Activated T-helper 1 cell treated with anti-CD3 and anti-CD28 coated beads, Interleukin-12 subunit alpha, Interleukin-12 subunit beta, Interleukin-2, Interleukin-4 antibody, amounts not matched to agents 30 ng/mL and 10 ng/mL and 1 ng/mL, durations not matched to agents 14 hours and 24 hours and 36 hours (primary cell): ENCODE measurements at regions of chr6 and their contacts with region 1.

Region 1: DNA sequence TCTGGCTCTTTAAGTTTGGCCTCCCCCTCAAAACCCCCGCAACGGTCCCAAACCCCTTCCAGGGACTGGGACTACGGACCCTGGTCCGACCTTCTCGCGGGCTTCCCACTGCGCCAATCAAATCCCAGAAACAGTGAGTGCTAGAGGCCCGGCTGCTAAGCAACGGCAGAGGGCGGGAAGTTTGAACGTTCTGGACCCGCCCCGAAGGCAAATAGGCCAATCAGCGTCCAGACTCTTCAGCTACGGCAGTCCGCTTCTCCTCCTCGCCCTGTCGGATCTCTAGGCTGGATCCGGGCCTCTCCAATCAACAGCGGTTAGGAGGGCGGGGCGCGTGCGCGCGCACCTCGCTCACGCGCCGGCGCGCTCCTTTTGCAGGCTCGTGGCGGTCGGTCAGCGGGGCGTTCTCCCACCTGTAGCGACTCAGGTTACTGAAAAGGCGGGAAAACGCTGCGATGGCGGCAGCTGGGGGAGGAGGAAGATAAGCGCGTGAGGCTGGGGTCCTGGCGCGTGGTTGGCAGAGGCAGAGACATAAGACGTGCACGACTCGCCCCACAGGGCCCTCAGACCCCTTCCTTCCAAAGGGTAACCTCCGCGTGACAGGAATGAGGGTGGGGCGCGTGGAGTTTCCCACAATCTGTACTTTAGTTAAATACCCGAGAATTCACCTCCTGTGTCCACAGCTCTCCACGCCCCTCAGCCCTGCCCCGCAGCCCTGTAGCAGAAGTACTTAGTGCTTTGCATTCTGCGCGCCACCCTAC is at the start of gene MSH5:
- DNase-seq: peak; percentile 97
- H3K4me3 Mint-ChIP-seq: peak within 1 kb of the TSS; percentile 98
- H3K27ac Mint-ChIP-seq: peak within 1 kb of the TSS; percentile 99
- H3K4me1 Mint-ChIP-seq: peaks cover 64% of the 10 kb centered on the region
- H3K27me3 Mint-ChIP-seq: peaks cover 3% of the 10 kb centered on the region
- total RNA-seq, gene MSH5: 80.5 and 83.4 TPM in 2 replicates

Region 2: GRCh38 chr6:30707281-30707872 is 1032.4 kb before region 1 on chr6:
- intact Hi-C with region 1: no loop called
- DNase-seq: no peak
- H3K4me3 Mint-ChIP-seq: no peak overlapping the region
- H3K27ac Mint-ChIP-seq: peak overlapping the region; percentile 52
- H3K4me1 Mint-ChIP-seq: peaks cover 25% of the 10 kb centered on the region
- H3K27me3 Mint-ChIP-seq: no peaks in the 10 kb centered on the region

Region 3: DNA sequence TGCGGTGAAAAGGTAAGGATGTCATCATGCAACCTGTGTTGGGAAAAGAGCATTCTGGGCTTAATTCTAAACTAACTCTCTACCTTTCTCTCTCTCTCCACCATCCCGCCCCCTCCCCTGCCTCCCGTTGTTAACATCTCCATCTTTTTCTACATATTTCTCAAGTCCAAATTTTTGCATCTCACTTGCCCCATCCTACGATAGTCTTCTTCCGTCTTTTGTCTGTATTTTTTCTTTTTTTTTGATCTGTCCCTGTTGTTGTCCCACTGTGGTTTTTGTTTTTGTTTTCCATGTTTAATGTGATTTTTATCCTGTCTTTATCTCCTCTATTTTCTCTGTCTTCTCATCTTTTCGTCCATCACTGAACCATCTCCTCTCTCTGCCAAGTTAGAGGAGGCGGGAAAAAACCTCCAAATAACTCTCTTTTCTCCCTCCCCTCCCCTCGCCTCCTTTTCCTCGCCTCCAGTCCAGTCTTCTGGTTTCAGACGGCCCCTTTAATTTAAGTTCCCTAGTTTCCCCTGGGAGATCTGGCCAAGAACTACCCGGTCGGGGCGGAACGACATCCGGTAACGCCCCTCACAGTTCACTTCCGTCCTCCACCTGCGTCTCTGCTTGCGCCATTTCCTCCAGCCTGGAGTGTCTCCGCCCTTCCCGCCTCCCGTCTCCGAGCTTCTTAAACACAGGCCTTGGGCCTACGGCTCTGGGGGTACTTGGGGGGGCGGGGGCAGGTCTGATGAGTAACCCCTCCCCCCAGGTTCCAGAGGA is 192.7 kb before region 1 on chr6 and contains the start of gene NFKBIL1:
- intact Hi-C with region 1: loop called (anchors 2 kb)
- DNase-seq: peak; percentile 88
- H3K4me3 Mint-ChIP-seq: peak within 1 kb of the TSS; percentile 87
- H3K27ac Mint-ChIP-seq: peak within 1 kb of the TSS; percentile 82
- H3K4me1 Mint-ChIP-seq: peaks cover 36% of the 10 kb centered on the region
- H3K27me3 Mint-ChIP-seq: peaks cover 3% of the 10 kb centered on the region
- total RNA-seq, gene NFKBIL1: 18.2 and 18.9 TPM in 2 replicates

Region 4: GRCh38 chr6:31657406-31658157 is 82.2 kb before region 1 on chr6:
- intact Hi-C with region 1: no loop called
- DNase-seq: peak; percentile 29
- H3K4me3 Mint-ChIP-seq: peak overlapping the region; percentile 91
- H3K27ac Mint-ChIP-seq: peak overlapping the region; percentile 24
- H3K4me1 Mint-ChIP-seq: peaks cover 66% of the 10 kb centered on the region
- H3K27me3 Mint-ChIP-seq: no peaks in the 10 kb centered on the region

Region 5: DNA sequence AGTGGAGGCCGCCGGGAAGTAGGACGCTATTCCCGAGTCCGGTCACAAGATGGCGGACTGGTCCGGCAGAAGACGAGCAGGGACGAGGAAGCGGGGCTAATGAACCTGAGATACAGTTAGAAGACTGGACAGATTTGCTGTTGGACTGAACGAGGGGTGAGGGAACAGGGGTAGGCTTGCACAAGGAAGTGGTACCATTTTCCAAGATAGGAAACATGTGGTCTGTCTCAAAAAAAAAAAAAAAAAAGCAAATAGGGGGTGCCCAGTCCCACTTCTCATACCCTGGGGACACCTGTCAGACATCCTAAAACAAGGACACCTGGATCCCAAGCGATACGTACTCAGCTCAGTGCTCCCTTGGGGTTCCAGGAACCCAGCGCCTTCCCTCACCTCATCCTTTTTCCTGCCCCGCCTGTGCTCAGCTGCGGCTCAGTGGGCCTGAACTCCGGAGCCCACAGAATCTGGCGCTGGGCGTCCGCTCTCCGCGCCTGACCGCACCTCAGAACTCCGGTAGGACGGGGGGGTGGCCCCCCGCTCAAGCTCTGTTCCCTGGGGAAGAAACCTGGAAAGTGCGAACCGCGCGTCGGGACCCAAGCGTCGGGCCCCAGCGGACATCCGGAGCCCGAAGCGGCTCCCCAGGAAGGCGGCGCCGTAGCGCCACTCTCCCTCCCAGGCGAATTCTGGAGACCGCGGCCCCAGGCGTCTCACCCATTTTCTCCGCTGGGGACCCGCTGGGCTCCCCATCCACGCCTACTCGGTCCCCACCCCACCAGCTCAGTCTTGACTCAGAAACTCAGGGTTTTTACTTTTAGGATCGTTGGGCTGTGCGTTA is 58.8 kb before region 1 on chr6 and contains the start of gene LY6G5C:
- intact Hi-C with region 1: loop called (anchors 1 kb)
- DNase-seq: peak; percentile 30
- H3K4me3 Mint-ChIP-seq: peak within 1 kb of the TSS; percentile 80
- H3K27ac Mint-ChIP-seq: peak within 1 kb of the TSS; percentile 73
- H3K4me1 Mint-ChIP-seq: peaks cover 24% of the 10 kb centered on the region
- H3K27me3 Mint-ChIP-seq: no peaks in the 10 kb centered on the region
- total RNA-seq, gene LY6G5C: 4.7 and 4.9 TPM in 2 replicates

Region 6: DNA sequence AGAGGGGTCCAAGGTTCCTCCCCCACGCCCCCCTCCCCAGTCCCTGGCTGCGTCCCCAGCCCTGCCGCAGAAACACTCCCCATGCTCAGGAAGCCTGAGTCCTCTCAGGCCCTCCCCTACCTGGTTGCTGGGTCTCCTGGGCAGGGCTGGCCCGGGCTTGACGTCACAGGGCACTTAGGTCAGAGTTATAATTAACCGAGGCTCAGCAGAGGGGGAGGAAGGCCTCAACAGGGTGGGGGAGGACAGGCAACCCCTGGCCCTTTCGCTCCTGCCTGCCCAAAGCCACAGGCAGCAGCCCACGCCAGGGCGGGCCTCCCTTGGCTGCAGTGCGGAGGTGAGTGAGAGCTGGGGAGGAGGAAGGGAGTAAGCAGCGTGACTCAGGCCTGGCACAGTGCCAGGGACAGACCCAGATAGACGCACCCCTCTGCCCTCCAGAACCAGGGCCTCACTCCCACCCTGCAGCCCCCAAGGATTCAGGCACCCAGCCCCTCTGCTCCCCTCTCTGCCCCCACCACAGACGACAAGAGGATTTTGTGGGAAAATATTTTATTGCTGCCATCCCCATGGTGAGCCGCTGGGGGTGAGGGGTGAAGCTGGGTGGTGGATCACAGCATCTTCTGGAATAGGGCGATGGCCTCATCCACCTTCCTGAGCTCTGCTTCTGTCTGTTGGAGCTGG is 37.3 kb after region 1 on chr6 and contains the start of gene VWA7:
- intact Hi-C with region 1: loop called (anchors 1 kb)
- DNase-seq: peak; percentile 68
- H3K4me3 Mint-ChIP-seq: no peak within 1 kb of the TSS
- H3K27ac Mint-ChIP-seq: peak within 1 kb of the TSS; percentile 87
- H3K4me1 Mint-ChIP-seq: peaks cover 25% of the 10 kb centered on the region
- H3K27me3 Mint-ChIP-seq: no peaks in the 10 kb centered on the region
- total RNA-seq, gene VWA7: 2.9 and 5.0 TPM in 2 replicates

Region 7: GRCh38 chr6:31806465-31807272 is 66.9 kb after region 1 on chr6 and contains the start of gene LSM2:
- intact Hi-C with region 1: loop called (anchors 1 kb)
- DNase-seq: peak; percentile 97
- H3K4me3 Mint-ChIP-seq: peak within 1 kb of the TSS; percentile 94
- H3K27ac Mint-ChIP-seq: peak within 1 kb of the TSS; percentile 90
- H3K4me1 Mint-ChIP-seq: peaks cover 20% of the 10 kb centered on the region
- H3K27me3 Mint-ChIP-seq: no peaks in the 10 kb centered on the region
- total RNA-seq, gene LSM2: 136 and 137 TPM in 2 replicates

Region 8: DNA sequence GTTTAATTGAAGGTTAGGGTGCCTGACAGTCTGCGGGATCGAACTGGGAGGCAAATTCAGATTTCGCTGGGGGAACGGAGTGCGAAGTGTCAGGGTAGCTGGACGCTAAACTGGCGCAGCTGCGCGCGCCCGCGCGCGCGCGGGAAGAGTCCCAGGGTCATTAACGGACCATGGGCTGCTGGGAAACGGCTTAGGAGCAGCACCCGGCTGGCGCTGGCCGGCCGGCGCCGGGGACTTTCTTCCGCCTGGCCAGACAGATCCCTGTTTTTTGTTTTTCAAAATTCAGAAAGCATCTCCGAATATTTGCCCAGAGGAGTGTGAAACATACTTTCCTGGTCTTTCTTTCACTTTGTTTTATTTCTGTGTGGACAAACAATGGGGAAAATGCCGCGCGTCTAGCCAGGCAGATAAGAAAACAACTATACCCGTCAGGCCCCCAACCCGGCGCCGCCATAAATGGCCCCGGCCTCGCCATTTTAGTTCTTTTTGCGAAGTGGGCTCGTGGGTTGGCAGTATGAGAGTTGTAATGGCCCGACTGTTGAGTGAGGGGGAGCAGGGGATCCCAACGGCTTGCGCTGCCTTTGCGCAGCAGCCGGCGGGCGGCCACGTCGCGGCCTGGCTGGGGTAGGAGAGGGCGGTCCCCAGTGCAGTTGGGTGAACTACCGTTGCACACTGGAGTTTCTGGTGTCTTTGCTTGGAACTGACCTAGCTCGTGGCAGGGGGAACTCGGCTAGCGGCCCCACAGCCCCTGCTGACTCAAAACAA is 94.8 kb after region 1 on chr6:
- intact Hi-C with region 1: loop called (anchors 2 kb)
- DNase-seq: peak; percentile 72
- H3K4me3 Mint-ChIP-seq: peak overlapping the region; percentile 94
- H3K27ac Mint-ChIP-seq: peak overlapping the region; percentile 100
- H3K4me1 Mint-ChIP-seq: peaks cover 49% of the 10 kb centered on the region
- H3K27me3 Mint-ChIP-seq: no peaks in the 10 kb centered on the region

Region 9: GRCh38 chr6:31968791-31969711 is 229.2 kb after region 1 on chr6:
- intact Hi-C with region 1: no loop called
- DNase-seq: no peak
- H3K4me3 Mint-ChIP-seq: peak overlapping the region; percentile 10
- H3K27ac Mint-ChIP-seq: peak overlapping the region; percentile 100
- H3K4me1 Mint-ChIP-seq: peaks cover 31% of the 10 kb centered on the region
- H3K27me3 Mint-ChIP-seq: no peaks in the 10 kb centered on the region